ENCODE measurements at regions of chr15 and their contacts with region 1.

Region 1: GRCh38 chr15:78049691-78050440 is 27.6 kb downstream of the TBC1D2B start:
- DNase-seq: peak in 7 of 9 experiments; percentile 39 to 80 (median 59)
- ATAC-seq: peak; percentile 39
- H3K4me3 ChIP-seq: peak overlapping the region; percentile 12 to 20
- H3K4me3 Mint-ChIP-seq: peak overlapping the region; percentile 63
- H3K27ac ChIP-seq: peak overlapping the region; percentile 30 to 92
- H3K27ac Mint-ChIP-seq: peak overlapping the region; percentile 88
- H3K4me1 ChIP-seq: peaks cover 88% of the 10 kb centered on the region
- H3K4me1 Mint-ChIP-seq: peaks cover 97% of the 10 kb centered on the region
- H3K27me3 ChIP-seq: no peaks in the 10 kb centered on the region
- H3K27me3 Mint-ChIP-seq: no peaks in the 10 kb centered on the region
- CTCF ChIP-seq: no peak

Region 2: GRCh38 chr15:78065284-78065872 is 15.5 kb after region 1 on chr15:
- CTCF ChIA-PET with region 1: interaction called, 24 read pairs
- POLR2A ChIA-PET with region 1: interaction called, 52 read pairs
- intact Hi-C with region 1: loop called (anchors 1 to 2 kb)
- DNase-seq: peak in 2 of 9 experiments; percentile 37 to 56
- ATAC-seq: no peak
- H3K4me3 ChIP-seq: peak overlapping the region; percentile 9 to 14
- H3K4me3 Mint-ChIP-seq: no peak overlapping the region
- H3K27ac ChIP-seq: peak overlapping the region; percentile 1 to 87
- H3K27ac Mint-ChIP-seq: no peak overlapping the region
- H3K4me1 ChIP-seq: peaks cover 87% of the 10 kb centered on the region
- H3K4me1 Mint-ChIP-seq: peaks cover 21% of the 10 kb centered on the region
- H3K27me3 ChIP-seq: no peaks in the 10 kb centered on the region
- H3K27me3 Mint-ChIP-seq: no peaks in the 10 kb centered on the region
- CTCF ChIP-seq: no peak

Region 3: GRCh38 chr15:78077058-78077877 is 27.4 kb after region 1 on chr15 and contains the start of gene TBC1D2B:
- CTCF ChIA-PET with region 1: interaction called, 14 read pairs
- POLR2A ChIA-PET with region 1: interaction called, 8 read pairs
- intact Hi-C with region 1: loop called in 1 of 2 experiments (anchors 2 kb)
- DNase-seq: peak in 8 of 9 experiments; percentile 56 to 86 (median 71)
- ATAC-seq: peak; percentile 80
- H3K4me3 ChIP-seq: peak within 1 kb of the TSS; percentile 87 to 90
- H3K4me3 Mint-ChIP-seq: peak within 1 kb of the TSS; percentile 100
- H3K27ac ChIP-seq: peak within 1 kb of the TSS; percentile 57 to 76
- H3K27ac Mint-ChIP-seq: peak within 1 kb of the TSS; percentile 99
- H3K4me1 ChIP-seq: peaks cover 35% of the 10 kb centered on the region
- H3K4me1 Mint-ChIP-seq: peaks cover 46% of the 10 kb centered on the region
- H3K27me3 ChIP-seq: no peaks in the 10 kb centered on the region
- H3K27me3 Mint-ChIP-seq: no peaks in the 10 kb centered on the region
- CTCF ChIP-seq: no peak
- total RNA-seq, gene TBC1D2B: 88.7 to 101 TPM

Region 4: DNA sequence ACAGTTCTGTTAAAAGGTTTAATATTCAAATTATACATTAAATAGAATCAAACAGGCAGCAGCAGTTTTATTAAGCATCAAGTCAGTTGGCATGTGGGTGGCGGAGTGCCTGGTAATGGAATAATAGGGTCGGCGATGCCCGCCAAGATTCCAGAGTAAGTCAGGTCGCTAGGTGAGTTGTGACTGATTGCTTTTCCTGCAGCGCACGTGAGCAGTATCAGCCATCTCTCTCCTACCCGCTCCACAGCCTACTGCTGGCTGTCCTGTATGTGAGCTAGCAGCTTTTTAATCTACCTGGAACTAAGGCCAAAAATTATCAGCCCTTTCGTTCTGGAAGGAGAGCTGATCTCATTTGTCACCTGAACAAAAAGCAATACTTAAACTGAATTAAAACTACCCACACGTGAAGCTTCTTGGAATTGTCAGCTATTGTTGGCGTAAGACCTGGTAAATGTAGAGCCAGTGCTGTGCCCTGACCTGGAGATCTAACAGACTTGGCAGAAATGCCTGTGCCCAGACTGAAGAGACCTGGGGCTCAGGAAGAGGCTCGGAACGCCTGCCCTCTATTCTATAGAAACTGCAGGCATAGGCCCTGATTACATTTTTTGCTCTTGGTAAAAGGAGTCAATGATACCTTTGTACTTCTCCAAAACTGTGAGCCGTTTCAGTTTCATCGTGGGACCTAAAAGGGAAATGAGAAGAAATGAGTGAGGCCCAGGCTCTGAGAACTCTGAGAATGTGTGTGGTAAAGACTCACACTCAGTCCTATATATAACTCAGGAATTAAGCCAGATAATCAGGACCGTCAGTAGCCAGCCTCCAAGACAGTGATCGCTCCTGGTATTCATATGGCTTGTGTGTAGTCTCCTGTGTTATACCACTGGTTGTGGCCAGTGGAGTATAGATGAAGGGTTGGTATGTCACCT is 121.2 kb after region 1 on chr15:
- CTCF ChIA-PET with region 1: no interaction called
- POLR2A ChIA-PET with region 1: no interaction called
- intact Hi-C with region 1: no loop called
- DNase-seq: no peak
- ATAC-seq: no peak
- H3K4me3 ChIP-seq: no peak overlapping the region
- H3K4me3 Mint-ChIP-seq: no peak overlapping the region
- H3K27ac ChIP-seq: no peak overlapping the region
- H3K27ac Mint-ChIP-seq: no peak overlapping the region
- H3K4me1 ChIP-seq: peaks cover 26% of the 10 kb centered on the region
- H3K4me1 Mint-ChIP-seq: peaks cover 36% of the 10 kb centered on the region
- H3K27me3 ChIP-seq: no peaks in the 10 kb centered on the region
- H3K27me3 Mint-ChIP-seq: no peaks in the 10 kb centered on the region
- CTCF ChIP-seq: no peak

Measured in CD8-positive, alpha-beta T cell (primary cell).